ENCODE measurements at regions of chr12 and their contacts with region 1.

Region 1: GRCh38 chr12:10331642-10332239 is 24.1 kb downstream of the KLRD1 start:
- DNase-seq: peak; percentile 36
- H3K4me3 ChIP-seq: no peak overlapping the region
- H3K27ac ChIP-seq: no peak overlapping the region
- H3K4me1 ChIP-seq: no peaks in the 10 kb centered on the region
- H3K27me3 ChIP-seq: no peaks in the 10 kb centered on the region
- CTCF ChIP-seq: peak; percentile 81 to 89

Region 2: GRCh38 chr12:10285919-10286318 is 45.8 kb before region 1 on chr12:
- CTCF ChIA-PET with region 1: no interaction called
- dilution Hi-C with region 1: loop called (anchors 5 kb)
- in situ Hi-C with region 1: no loop called
- intact Hi-C with region 1: no loop called
- DNase-seq: no peak
- H3K4me3 ChIP-seq: no peak overlapping the region
- H3K27ac ChIP-seq: no peak overlapping the region
- H3K4me1 ChIP-seq: no peaks in the 10 kb centered on the region
- H3K27me3 ChIP-seq: no peaks in the 10 kb centered on the region
- CTCF ChIP-seq: no peak

Region 3: DNA sequence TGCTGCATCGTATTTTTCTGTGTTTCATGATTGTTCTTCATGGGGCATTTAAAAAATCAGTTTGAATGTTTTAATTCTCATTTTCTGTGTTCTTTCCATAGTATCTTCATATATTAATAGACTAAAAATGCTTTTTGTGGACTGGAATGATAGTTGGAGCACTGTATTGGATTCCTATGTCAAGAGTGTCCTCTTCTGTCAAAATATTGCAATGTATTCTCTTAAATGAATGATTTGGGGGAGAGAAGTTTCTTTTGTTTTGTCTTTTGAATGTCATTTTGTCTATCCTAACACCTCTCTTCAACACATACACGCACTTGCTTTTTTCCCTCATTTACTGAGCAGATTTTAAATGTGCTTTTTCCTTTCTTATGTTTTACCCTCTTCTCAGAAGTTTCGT is 169.3 kb after region 1 on chr12:
- CTCF ChIA-PET with region 1: no interaction called
- dilution Hi-C with region 1: no loop called
- in situ Hi-C with region 1: no loop called
- intact Hi-C with region 1: loop called (anchors 1 kb)
- DNase-seq: peak; percentile 9
- H3K4me3 ChIP-seq: no peak overlapping the region
- H3K27ac ChIP-seq: no peak overlapping the region
- H3K4me1 ChIP-seq: no peaks in the 10 kb centered on the region
- H3K27me3 ChIP-seq: peaks cover 4% of the 10 kb centered on the region
- CTCF ChIP-seq: peak; percentile 40 to 67

Region 4: DNA sequence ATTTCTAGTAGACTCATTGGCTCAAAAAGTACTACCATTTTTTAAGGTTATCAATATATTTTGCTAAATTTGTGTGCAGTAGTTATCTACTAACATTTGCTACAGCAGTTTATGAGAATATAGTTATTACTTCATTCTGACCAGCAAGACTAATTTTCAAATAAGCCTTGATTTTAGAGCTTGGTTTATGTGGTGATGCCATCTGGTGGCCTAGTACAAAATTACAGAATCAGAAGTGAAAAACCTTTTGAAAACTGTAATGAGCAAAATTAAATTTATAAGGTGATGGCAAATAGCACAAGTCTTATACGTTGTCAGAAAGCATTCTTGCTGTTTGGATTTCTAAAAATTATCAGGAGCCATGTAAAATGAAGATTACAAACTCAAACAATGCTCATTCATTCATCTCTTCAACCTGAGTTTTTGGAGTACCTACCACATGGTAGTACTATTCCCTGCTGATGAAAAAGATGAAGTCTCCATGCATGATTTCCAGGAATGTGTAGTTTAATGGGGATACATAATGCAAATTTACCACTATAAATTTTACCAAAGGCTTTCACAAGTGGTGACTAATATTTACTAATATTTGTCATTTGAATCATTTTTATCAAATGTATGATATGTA is 230.7 kb after region 1 on chr12:
- CTCF ChIA-PET with region 1: no interaction called
- dilution Hi-C with region 1: no loop called
- in situ Hi-C with region 1: no loop called
- intact Hi-C with region 1: loop called (anchors 1 kb)
- DNase-seq: peak; percentile 20
- H3K4me3 ChIP-seq: no peak overlapping the region
- H3K27ac ChIP-seq: no peak overlapping the region
- H3K4me1 ChIP-seq: no peaks in the 10 kb centered on the region
- H3K27me3 ChIP-seq: no peaks in the 10 kb centered on the region
- CTCF ChIP-seq: peak; percentile 64

Measured in mammary epithelial cell (primary cell).